OCI-LY7 (cell line): ENCODE measurements at regions of chr3 and their contacts with region 1.

Region 1: DNA sequence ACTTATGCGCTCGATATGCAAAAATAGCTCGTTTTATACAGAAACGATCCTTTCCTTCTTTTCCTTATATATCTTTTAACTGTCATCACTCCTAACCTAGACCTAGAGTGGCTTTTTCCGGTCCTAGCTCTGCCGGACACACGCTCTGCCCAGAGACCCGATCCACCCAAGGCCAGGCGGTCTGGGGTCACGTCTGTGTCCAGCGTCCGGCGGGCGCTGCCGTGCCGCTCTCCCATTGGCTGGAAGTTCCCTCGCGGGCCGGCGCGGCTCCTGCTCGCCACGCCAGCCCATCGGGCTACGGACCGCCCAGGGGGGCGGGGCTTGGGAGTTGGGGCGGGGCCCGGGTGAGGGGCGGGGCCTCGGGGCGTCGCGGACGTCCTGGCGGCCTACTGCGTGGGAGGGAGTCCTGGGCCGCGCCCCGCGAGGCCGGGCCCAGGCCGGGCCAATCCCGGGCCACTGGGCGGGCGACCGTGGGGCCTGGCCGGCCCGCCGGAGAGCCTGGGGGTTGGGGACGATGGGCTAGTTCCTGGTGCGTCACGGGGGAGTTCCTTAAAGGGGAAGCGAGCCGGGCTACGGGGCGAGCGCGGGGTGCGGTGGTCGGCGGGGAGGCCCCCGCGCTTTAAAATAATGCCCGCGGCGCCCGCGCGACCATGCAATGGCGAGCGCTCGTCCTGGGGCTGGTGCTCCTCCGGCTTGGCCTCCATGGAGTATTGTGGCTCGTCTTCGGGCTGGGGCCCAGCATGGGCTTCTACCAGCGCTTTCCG is at the start of gene EDEM1:
- DNase-seq: peak; percentile 96
- H3K4me3 ChIP-seq: peak within 1 kb of the TSS; percentile 98
- H3K27ac ChIP-seq: peak within 1 kb of the TSS; percentile 99
- H3K4me1 ChIP-seq: peaks cover 53% of the 10 kb centered on the region
- CTCF ChIP-seq: no peak
- total RNA-seq, gene EDEM1: 125 and 186 TPM in 2 replicates

Region 2: GRCh38 chr3:4504340-4505261 is 682.7 kb before region 1 on chr3:
- CTCF ChIA-PET with region 1: no interaction called
- POLR2A ChIA-PET with region 1: interaction called, 4 read pairs
- intact Hi-C with region 1: loop called (anchors 2 kb)
- DNase-seq: peak; percentile 59
- H3K4me3 ChIP-seq: peak overlapping the region; percentile 64
- H3K27ac ChIP-seq: peak overlapping the region; percentile 98
- H3K4me1 ChIP-seq: peaks cover 83% of the 10 kb centered on the region
- CTCF ChIP-seq: no peak

Region 3: DNA sequence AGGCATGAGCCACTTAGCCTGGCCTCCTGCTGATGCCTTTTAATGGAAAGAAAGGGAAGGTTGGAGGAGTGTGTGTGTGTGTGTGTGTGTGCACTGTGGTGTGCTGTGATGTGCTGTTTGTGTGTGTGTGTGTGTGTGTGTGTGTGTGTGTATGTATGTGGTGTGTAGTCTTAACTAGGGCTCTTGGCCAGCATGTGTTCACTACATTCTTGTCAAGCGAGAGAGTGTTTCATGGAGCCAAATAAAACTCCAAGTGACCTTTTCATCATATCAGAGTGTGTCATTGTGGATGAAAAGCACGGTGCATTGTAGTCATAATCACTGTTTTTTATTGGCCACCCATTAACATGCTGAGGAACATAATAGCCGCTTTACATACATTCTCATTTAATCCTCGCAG is 238.9 kb before region 1 on chr3:
- CTCF ChIA-PET with region 1: no interaction called
- POLR2A ChIA-PET with region 1: no interaction called
- intact Hi-C with region 1: no loop called
- DNase-seq: no peak
- H3K4me3 ChIP-seq: no peak overlapping the region
- H3K27ac ChIP-seq: no peak overlapping the region
- H3K4me1 ChIP-seq: no peaks in the 10 kb centered on the region
- CTCF ChIP-seq: no peak

Region 4: DNA sequence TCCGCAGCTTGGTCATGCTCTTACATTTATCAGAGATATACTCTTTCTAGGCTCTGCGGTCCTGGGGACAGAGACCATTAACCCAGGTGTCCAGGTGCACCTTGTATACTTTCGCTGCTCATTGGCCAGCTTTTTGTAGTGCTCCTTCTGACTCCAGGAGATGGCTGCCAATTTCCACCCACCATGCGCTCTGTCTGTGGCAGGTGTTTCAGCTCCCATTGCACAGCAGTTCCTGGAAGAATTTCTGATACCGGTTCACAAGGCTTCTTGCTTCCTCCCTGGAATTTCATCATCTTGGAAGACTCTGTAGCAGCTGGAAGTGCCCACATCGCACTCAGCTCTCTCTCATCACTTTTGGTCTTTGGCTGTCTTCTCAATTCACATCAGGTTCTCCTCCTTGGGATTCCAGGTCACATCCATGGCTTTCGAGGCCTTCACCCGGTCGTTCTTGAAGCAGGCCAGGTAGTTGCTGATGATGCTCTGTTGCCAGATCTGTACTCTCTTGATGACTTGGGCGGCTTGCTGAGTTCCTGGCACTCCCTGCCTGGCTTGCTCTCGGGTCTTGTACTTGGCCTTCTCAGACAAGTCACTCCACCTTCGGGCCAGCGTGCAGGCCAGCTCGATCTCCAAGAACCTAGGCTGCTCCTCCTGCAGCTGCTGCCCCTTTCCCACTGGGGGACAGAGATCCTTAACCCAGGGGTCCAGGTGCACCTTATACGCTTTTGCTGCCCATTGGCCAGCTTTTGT is 106.4 kb before region 1 on chr3:
- CTCF ChIA-PET with region 1: no interaction called
- POLR2A ChIA-PET with region 1: no interaction called
- intact Hi-C with region 1: no loop called
- DNase-seq: no peak
- H3K4me3 ChIP-seq: no peak overlapping the region
- H3K27ac ChIP-seq: no peak overlapping the region
- H3K4me1 ChIP-seq: no peaks in the 10 kb centered on the region
- CTCF ChIP-seq: no peak

Region 5: DNA sequence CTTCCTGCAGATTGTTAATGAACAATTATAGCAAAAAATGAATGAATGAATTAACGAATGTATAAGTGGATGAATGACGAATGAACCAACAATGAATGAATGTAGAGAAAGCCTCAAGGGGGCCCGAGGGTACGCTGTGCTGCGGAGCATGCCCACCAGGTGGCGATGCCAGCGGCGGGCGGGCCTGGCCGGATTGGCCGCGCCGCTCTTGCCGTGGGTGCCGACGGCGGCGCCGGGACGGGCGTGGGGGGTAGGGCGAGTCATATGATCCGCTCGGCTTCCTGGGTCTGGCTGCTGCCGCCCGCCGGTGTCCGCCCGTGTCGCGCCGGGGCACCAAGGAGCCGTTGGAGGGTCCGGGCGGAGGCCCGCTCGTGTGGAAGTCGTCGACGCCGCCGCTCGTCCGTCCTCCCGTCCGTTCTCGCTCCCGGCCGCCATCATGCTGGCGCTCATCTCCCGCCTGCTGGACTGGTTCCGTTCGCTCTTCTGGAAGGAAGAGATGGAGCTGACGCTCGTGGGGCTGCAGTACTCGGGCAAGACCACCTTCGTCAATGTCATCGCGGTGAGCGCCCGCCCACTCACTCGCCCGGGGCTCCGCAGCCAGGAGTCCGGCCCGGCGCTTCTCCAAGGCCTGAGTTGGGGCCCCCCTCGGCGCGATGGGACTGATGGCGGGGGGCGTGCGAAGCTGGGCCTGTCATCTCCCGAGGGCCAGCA is 65.2 kb before region 1 on chr3 and contains the start of gene ARL8B:
- CTCF ChIA-PET with region 1: interaction called, 3 read pairs
- POLR2A ChIA-PET with region 1: interaction called, 23 read pairs
- intact Hi-C with region 1: loop called (anchors 1 kb)
- DNase-seq: peak; percentile 92
- H3K4me3 ChIP-seq: peak within 1 kb of the TSS; percentile 99
- H3K27ac ChIP-seq: peak within 1 kb of the TSS; percentile 31
- H3K4me1 ChIP-seq: peaks cover 27% of the 10 kb centered on the region
- CTCF ChIP-seq: peak; percentile 95
- total RNA-seq, gene ARL8B: 20.1 and 27.1 TPM in 2 replicates

Region 6: GRCh38 chr3:5136211-5136918 is 51.0 kb before region 1 on chr3:
- CTCF ChIA-PET with region 1: interaction called, 12 read pairs
- POLR2A ChIA-PET with region 1: interaction called, 28 read pairs
- intact Hi-C with region 1: loop called (anchors 1 kb)
- DNase-seq: peak; percentile 83
- H3K4me3 ChIP-seq: no peak overlapping the region
- H3K27ac ChIP-seq: peak overlapping the region; percentile 53
- H3K4me1 ChIP-seq: peaks cover 47% of the 10 kb centered on the region
- CTCF ChIP-seq: peak; percentile 92

Region 7: DNA sequence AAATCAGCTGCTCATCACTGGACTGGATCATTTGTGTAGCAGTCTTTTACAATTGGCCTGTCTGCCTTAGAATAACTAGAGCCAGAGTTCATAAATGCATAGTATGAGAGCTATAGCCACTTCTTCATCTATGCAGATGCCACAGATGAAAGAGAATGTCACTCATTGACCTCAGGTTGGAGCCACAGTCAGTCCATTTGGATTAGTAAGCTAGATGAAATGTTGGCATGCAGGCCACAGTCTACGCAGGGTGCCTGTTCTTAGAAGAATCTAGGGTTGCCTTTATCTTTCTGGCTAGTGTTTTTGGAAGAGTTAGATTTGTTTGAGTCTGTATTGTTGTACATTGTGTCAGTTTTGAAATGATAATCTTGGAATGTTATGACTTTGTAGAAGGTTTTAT is 25.2 kb before region 1 on chr3:
- CTCF ChIA-PET with region 1: no interaction called
- POLR2A ChIA-PET with region 1: interaction called, 67 read pairs
- intact Hi-C with region 1: no loop called
- DNase-seq: no peak
- H3K4me3 ChIP-seq: no peak overlapping the region
- H3K27ac ChIP-seq: no peak overlapping the region
- H3K4me1 ChIP-seq: peaks cover 61% of the 10 kb centered on the region
- CTCF ChIP-seq: no peak

Region 8: GRCh38 chr3:5168110-5168509 is 19.2 kb before region 1 on chr3:
- CTCF ChIA-PET with region 1: no interaction called
- POLR2A ChIA-PET with region 1: interaction called, 67 read pairs
- intact Hi-C with region 1: no loop called
- DNase-seq: no peak
- H3K4me3 ChIP-seq: no peak overlapping the region
- H3K27ac ChIP-seq: peak overlapping the region; percentile 3
- H3K4me1 ChIP-seq: peaks cover 56% of the 10 kb centered on the region
- CTCF ChIP-seq: no peak